MCF 10A (cell line): ENCODE measurements at regions of chrX and their contacts with region 1.

Region 1: GRCh38 chrX:69387567-69388487 is 116.3 kb upstream of the NALF2 start:
- DNase-seq: peak; percentile 45
- H3K4me3 Mint-ChIP-seq: no peak overlapping the region
- H3K27ac Mint-ChIP-seq: no peak overlapping the region
- H3K4me1 Mint-ChIP-seq: no peaks in the 10 kb centered on the region
- H3K27me3 Mint-ChIP-seq: peaks cover 100% of the 10 kb centered on the region
- CTCF ChIP-seq: peak; percentile 83

Region 2: GRCh38 chrX:68822641-68823410 is 565.0 kb before region 1 on chrX:
- CTCF ChIA-PET with region 1: interaction called, 44 read pairs
- POLR2A ChIA-PET with region 1: no interaction called
- intact Hi-C with region 1: loop called (anchors 2 kb)
- DNase-seq: peak; percentile 65
- H3K4me3 Mint-ChIP-seq: no peak overlapping the region
- H3K27ac Mint-ChIP-seq: no peak overlapping the region
- H3K4me1 Mint-ChIP-seq: peaks cover 11% of the 10 kb centered on the region
- H3K27me3 Mint-ChIP-seq: peaks cover 40% of the 10 kb centered on the region
- CTCF ChIP-seq: peak; percentile 76

Region 3: DNA sequence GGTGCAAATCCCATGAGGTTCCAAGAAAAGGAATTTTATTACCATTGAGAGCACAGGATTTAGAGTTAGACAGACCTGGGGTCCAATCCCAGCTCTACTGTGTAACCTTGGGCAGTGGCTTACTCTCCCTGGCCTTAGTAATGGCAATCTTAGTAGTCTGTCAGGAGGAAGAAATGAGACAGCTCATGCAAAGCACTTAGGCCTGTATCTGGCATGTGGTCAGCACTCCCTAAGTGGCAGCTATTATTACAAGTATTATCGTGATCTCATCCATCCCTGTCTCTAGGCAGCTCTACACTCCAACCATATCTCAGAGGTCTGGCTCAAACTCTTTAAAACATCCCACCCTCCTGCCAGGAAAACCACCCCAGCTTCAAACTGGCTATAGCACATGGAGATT is 13.3 kb before region 1 on chrX:
- CTCF ChIA-PET with region 1: interaction called, 48 read pairs
- POLR2A ChIA-PET with region 1: interaction called, 3 read pairs
- intact Hi-C with region 1: no loop called
- DNase-seq: no peak
- H3K4me3 Mint-ChIP-seq: no peak overlapping the region
- H3K27ac Mint-ChIP-seq: no peak overlapping the region
- H3K4me1 Mint-ChIP-seq: no peaks in the 10 kb centered on the region
- H3K27me3 Mint-ChIP-seq: peaks cover 69% of the 10 kb centered on the region
- CTCF ChIP-seq: no peak